IMR-90 (cell line): ENCODE measurements at regions of chrX and their contacts with region 1.

Region 1: DNA sequence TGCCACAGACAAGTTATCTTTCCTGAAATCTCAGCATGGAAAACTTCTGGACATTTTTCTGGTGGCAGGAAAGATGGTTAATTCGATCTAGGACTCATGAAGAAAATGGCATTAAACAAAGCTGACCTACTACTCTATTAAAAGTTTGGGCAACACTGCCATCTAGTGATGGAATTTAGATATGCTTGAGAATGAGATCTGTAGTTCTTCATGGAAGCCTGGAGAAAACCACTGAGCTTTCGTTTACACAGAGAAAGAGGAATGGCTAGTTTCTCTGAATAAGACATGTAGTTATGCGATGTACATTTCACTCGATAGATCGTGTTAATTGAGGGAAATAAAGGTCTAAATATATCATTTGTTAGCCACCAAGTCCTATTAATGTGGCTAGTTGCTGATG is 51.7 kb upstream of the CHRDL1 start:
- DNase-seq: peak; percentile 63
- ATAC-seq: peak; percentile 86
- H3K4me3 ChIP-seq: no peak overlapping the region
- H3K27ac ChIP-seq: no peak overlapping the region
- H3K4me1 ChIP-seq: no peaks in the 10 kb centered on the region
- H3K27me3 ChIP-seq: peaks cover 17% of the 10 kb centered on the region
- CTCF ChIP-seq: peak; percentile 66
- POLR2A ChIP-seq: no peak
- RAD21 ChIP-seq: peak; percentile 61

Region 2: GRCh38 chrX:110706446-110706845 is 140.9 kb before region 1 on chrX:
- CTCF ChIA-PET with region 1: no interaction called
- POLR2A ChIA-PET with region 1: no interaction called
- dilution Hi-C with region 1: no loop called
- in situ Hi-C with region 1: no loop called
- intact Hi-C with region 1: loop called (anchors 1 kb)
- DNase-seq: no peak
- ATAC-seq: no peak
- H3K4me3 ChIP-seq: no peak overlapping the region
- H3K27ac ChIP-seq: no peak overlapping the region
- H3K4me1 ChIP-seq: no peaks in the 10 kb centered on the region
- H3K27me3 ChIP-seq: peaks cover 7% of the 10 kb centered on the region
- CTCF ChIP-seq: no peak
- POLR2A ChIP-seq: no peak
- RAD21 ChIP-seq: no peak

Region 3: DNA sequence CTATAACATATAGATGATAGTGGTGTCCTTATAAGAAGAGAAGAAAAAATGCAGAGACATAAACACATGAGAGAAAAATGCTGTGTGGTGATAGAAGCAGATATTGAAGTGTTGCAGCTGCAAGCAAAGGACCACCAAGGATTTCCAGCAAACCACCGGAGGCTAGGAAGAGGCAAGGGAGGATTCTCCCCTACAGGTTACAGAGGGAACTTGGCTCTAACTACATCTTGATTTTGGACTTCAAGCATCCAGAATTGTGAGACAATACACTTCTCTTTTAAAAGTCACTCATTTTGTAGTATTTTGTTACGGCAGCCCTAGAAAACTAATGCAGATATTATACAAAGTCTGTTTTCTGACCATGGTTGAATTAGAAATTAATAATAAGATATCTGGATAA is 21.4 kb before region 1 on chrX:
- CTCF ChIA-PET with region 1: no interaction called
- POLR2A ChIA-PET with region 1: no interaction called
- dilution Hi-C with region 1: no loop called
- in situ Hi-C with region 1: no loop called
- intact Hi-C with region 1: no loop called
- DNase-seq: no peak
- ATAC-seq: no peak
- H3K4me3 ChIP-seq: no peak overlapping the region
- H3K27ac ChIP-seq: no peak overlapping the region
- H3K4me1 ChIP-seq: no peaks in the 10 kb centered on the region
- H3K27me3 ChIP-seq: peaks cover 5% of the 10 kb centered on the region
- CTCF ChIP-seq: no peak
- POLR2A ChIP-seq: no peak
- RAD21 ChIP-seq: no peak

Region 4: GRCh38 chrX:111483134-111483533 is 635.8 kb after region 1 on chrX:
- CTCF ChIA-PET with region 1: no interaction called
- POLR2A ChIA-PET with region 1: no interaction called
- dilution Hi-C with region 1: no loop called
- in situ Hi-C with region 1: no loop called
- intact Hi-C with region 1: no loop called
- DNase-seq: no peak
- ATAC-seq: no peak
- H3K4me3 ChIP-seq: no peak overlapping the region
- H3K27ac ChIP-seq: no peak overlapping the region
- H3K4me1 ChIP-seq: no peaks in the 10 kb centered on the region
- H3K27me3 ChIP-seq: no peaks in the 10 kb centered on the region
- CTCF ChIP-seq: no peak
- POLR2A ChIP-seq: no peak
- RAD21 ChIP-seq: no peak